Endothelial cell of umbilical vein (primary cell): ENCODE measurements at regions of chr6 and their contacts with region 1.

Region 1: DNA sequence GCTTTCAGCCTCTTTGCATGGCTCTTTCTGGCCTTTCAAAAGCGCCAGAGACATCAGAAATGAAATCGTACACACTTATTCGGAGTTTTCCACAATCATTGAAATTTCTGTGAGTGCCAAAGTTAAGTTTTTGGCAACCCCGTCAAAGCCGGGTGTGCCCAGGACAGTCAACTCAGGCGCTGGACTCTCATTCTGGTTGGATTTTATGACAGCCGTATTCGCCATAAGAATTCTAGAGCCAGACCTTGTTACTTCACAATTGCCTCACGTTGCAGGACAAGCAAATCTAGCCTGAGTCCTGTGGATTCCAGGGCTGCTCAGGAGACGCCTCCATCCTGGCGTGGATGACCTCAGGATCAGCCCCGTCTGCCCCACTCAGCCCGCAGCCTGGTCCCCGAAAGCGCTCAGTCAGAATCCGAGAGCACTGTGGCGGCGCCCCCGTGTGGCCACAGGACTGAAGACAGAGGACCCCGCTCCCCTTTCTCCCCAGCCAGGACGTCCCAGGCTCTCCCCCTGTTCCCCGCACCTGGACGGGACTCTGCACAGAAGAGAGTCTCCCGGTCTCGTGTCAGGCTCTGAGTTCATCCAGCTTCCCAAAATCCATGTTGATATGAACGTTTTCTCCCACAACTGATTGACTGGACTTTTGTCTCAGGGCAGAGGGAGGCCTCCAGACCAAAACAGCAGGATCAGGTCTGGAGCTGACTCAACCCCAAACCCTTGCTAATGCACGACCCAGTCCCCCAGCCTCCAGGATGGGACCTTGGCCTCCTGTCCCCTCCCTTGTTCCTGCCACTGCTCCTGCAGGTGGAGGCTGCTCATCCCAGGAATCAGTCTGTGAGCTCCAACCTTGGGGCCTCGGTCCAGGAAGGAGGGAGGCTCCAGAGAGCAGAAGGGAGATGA is 38.2 kb downstream of the MICA start:
- DNase-seq: peak; percentile 56
- H3K4me3 ChIP-seq: no peak overlapping the region
- H3K27ac ChIP-seq: no peak overlapping the region
- H3K4me1 ChIP-seq: no peaks in the 10 kb centered on the region
- H3K27me3 ChIP-seq: peaks cover 22 to 40% of the 10 kb centered on the region in 2 experiments
- CTCF ChIP-seq: peak; percentile 85 to 90
- POLR2A ChIP-seq: no peak

Region 2: GRCh38 chr6:31143148-31143547 is 298.5 kb before region 1 on chr6:
- CTCF ChIA-PET with region 1: no interaction called
- POLR2A ChIA-PET with region 1: no interaction called
- dilution Hi-C with region 1: no loop called
- intact Hi-C with region 1: loop called (anchors 5 kb)
- DNase-seq: no peak
- H3K4me3 ChIP-seq: no peak overlapping the region
- H3K27ac ChIP-seq: no peak overlapping the region
- H3K4me1 ChIP-seq: peaks cover 8% of the 10 kb centered on the region
- H3K27me3 ChIP-seq: no peaks in the 10 kb centered on the region
- CTCF ChIP-seq: no peak
- POLR2A ChIP-seq: no peak

Region 3: GRCh38 chr6:31393932-31394331 is 47.7 kb before region 1 on chr6:
- CTCF ChIA-PET with region 1: interaction called, 84 read pairs
- POLR2A ChIA-PET with region 1: no interaction called
- dilution Hi-C with region 1: no loop called
- intact Hi-C with region 1: loop called (anchors 1 kb)
- DNase-seq: no peak
- H3K4me3 ChIP-seq: no peak overlapping the region
- H3K27ac ChIP-seq: no peak overlapping the region
- H3K4me1 ChIP-seq: peaks cover 14% of the 10 kb centered on the region
- H3K27me3 ChIP-seq: no peaks in the 10 kb centered on the region
- CTCF ChIP-seq: no peak
- POLR2A ChIP-seq: no peak

Region 4: GRCh38 chr6:31403283-31403989 is 38.2 kb before region 1 on chr6 and contains the start of gene MICA:
- CTCF ChIA-PET with region 1: interaction called, 84 read pairs
- POLR2A ChIA-PET with region 1: no interaction called
- dilution Hi-C with region 1: no loop called
- intact Hi-C with region 1: loop called (anchors 1 kb)
- DNase-seq: peak; percentile 90
- H3K4me3 ChIP-seq: peak within 1 kb of the TSS; percentile 22 to 57 (median 26)
- H3K27ac ChIP-seq: peak within 1 kb of the TSS; percentile 92
- H3K4me1 ChIP-seq: peaks cover 28% of the 10 kb centered on the region
- H3K27me3 ChIP-seq: no peaks in the 10 kb centered on the region
- CTCF ChIP-seq: no peak
- POLR2A ChIP-seq: peak; percentile 91
- total RNA-seq, gene MICA: 42.5 and 45.2 TPM in 2 replicates

Region 5: DNA sequence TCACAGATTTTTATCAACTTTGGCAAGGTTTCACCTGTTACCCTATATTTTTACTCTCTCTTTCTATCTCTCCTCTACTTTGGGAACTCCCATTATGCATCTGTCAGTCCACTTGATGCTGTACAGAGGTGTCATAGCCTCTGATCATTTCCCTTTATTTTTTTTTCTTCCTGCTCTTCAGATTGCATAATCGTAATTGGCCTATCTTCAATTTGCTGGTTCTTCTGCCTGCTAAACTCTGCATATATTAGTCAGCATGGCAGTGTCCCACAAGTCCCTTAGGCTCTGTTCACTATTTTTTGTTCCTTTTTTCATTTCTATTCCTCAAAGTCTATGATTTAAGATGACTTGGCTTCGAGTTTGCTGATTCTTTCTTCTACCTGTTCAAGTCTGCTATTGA is 11.6 kb after region 1 on chr6:
- CTCF ChIA-PET with region 1: interaction called, 12 read pairs
- POLR2A ChIA-PET with region 1: no interaction called
- dilution Hi-C with region 1: no loop called
- intact Hi-C with region 1: no loop called
- DNase-seq: no peak
- H3K4me3 ChIP-seq: no peak overlapping the region
- H3K27ac ChIP-seq: no peak overlapping the region
- H3K4me1 ChIP-seq: no peaks in the 10 kb centered on the region
- H3K27me3 ChIP-seq: peaks cover 17 to 43% of the 10 kb centered on the region in 2 experiments
- CTCF ChIP-seq: no peak
- POLR2A ChIP-seq: no peak

Region 6: DNA sequence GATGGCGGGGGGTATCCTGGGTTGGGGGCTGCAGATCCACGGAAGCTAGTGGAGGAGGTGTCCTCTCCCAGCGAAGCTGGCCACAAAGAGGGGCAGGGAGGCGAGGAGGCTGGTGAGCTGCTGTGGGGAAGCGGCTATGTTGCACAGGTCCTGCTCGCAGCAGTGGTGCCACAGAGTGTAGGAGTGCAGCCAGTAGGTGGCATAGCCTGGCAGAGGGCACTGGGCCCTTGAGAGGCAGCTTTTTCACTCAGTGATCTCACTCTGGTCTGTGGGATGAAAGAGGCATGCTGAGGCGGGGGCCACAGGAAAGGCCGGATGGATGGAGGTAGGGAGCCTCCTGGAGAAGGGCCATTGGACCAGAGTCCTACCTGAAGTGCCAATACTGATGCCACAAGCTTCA is 270.7 kb after region 1 on chr6:
- CTCF ChIA-PET with region 1: no interaction called
- POLR2A ChIA-PET with region 1: no interaction called
- dilution Hi-C with region 1: no loop called
- intact Hi-C with region 1: no loop called
- DNase-seq: no peak
- H3K4me3 ChIP-seq: no peak overlapping the region
- H3K27ac ChIP-seq: no peak overlapping the region
- H3K4me1 ChIP-seq: peaks cover 8% of the 10 kb centered on the region
- H3K27me3 ChIP-seq: no peaks in the 10 kb centered on the region
- CTCF ChIP-seq: peak in 1 of 2 donors; percentile 35
- POLR2A ChIP-seq: no peak